Common myeloid progenitor, CD34-positive (primary cell): ENCODE measurements at regions of chr21 and their contacts with region 1.

Region 1: DNA sequence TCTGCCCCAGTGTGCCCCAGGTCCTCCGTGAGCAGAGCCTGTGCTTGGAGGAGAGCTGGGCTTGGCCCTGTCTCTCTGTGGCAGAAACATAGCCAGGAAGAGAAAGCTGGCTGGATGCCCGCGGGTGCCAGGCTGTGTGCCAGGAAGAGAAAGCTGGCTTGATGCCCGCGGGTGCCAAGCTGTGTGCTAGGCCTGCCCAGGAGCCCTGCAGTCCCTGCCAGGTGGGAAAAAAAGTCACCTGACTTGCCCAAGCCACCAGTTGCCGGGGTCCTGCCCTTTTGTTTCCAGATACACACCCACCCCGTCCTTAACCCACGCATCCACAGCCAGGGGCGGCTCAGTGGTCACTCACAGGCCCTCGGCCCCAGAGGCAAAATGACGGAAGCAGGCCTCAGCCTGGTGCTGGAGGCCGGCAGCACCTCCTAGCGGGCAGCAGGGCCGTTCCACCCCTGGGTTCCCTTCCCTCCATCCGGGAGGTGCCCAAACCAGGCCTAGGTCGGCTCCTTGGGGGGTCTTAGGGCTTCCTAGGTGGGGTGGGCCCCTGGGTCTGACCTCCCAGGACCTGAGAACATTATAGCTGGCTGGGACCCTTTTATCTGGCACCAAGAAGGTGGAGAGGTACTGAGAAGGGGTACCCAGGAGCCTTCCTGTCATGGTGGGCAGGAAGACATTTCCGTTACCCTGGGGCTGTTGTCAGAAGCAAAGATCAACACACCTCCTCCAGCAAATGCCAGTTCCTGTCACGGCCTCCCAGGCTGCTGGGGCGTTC is 9.1 kb downstream of the ITGB2 start:
- DNase-seq: peak; percentile 51 to 75 (median 65)
- H3K4me3 ChIP-seq: peak overlapping the region in 4 of 7 experiments; percentile 11 to 56 (median 26)
- H3K27ac ChIP-seq: peak overlapping the region; percentile 58 to 76
- H3K4me1 ChIP-seq: peaks cover 8 to 86% (median 83%) of the 10 kb centered on the region in 4 experiments
- H3K27me3 ChIP-seq: no peaks in the 10 kb centered on the region

Region 2: DNA sequence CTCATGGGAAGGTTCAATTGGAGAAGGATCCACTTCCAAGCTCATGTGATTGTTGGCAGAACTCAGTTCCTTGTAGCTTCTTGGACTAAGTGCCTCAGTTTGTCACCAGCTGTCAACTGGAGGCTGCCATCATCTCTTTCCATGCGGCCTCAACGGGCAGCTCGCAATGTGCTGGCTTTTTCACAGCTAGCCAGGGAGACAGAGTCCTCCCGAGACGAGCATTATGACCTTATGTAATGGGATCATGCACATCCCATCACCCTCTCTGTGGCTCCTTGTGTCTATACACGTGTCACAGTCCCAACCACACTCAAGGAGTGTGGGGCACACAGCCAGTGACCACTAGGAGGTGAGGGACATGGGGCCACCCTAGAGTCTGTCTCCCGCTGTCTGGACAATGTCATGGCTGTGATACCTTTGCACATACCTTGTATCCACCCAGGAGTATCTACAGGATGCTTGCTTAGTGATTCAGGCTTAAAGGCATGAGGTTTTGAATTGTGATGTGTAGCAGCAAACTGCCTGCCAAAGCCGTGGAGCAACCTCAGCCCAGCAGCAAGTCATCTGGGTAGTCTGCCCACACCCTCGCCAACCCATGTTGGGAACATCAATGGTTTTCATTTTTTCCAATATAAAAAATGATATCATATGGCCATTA is 315.4 kb before region 1 on chr21:
- CTCF ChIA-PET with region 1: no interaction called
- POLR2A ChIA-PET with region 1: no interaction called
- DNase-seq: no peak
- H3K4me3 ChIP-seq: no peak overlapping the region
- H3K27ac ChIP-seq: no peak overlapping the region
- H3K4me1 ChIP-seq: peaks cover 0 to 5% (median 0%) of the 10 kb centered on the region in 4 experiments
- H3K27me3 ChIP-seq: peaks cover 0 to 12% (median 0%) of the 10 kb centered on the region in 5 experiments

Region 3: GRCh38 chr21:44880762-44881585 is 30.6 kb before region 1 on chr21:
- CTCF ChIA-PET with region 1: interaction called, 13 read pairs
- POLR2A ChIA-PET with region 1: interaction called, 6 read pairs
- DNase-seq: peak; percentile 91 to 98 (median 95)
- H3K4me3 ChIP-seq: peak overlapping the region in 6 of 7 experiments; percentile 4 to 46 (median 25)
- H3K27ac ChIP-seq: peak overlapping the region; percentile 75 to 77
- H3K4me1 ChIP-seq: peaks cover 39 to 75% (median 68%) of the 10 kb centered on the region in 4 experiments
- H3K27me3 ChIP-seq: no peaks in the 10 kb centered on the region

Region 4: DNA sequence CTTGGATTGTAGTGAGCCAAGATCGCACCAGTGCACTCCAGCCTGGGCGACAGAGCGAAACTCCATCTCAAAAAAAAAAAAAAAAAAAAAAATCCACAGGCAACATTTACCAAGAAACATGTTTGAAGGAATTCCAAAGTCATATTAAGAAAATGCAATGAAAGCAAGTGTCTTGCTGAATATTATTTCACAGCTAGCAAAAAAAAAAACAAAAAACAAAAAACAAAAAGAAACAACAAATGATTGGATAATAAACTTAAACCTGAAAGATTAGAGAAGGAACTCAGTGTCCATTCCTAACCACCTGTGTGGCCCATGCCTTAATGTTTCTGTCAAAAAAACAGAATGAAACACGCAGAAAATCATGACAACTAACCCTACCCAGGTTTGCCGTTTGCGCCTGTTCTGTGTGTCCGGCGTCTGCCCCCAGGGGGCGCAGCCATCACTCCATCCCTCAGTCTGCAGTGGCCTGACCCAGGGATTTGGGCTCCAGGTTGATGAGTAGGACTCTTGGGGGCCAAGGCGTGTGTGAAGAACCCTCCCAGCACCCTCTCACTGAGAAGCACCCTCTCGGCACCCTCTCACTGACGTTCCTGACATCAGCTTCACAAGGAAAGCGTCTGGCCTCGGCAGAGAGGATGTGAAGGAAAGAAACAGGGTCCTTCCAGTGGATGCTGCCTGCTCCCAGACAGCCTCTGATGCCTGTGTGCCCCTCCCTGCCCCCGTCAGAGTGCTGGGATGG is 18.9 kb before region 1 on chr21:
- CTCF ChIA-PET with region 1: interaction called, 50 read pairs
- POLR2A ChIA-PET with region 1: interaction called, 5 read pairs
- DNase-seq: peak in 2 of 3 donors; percentile 63 to 74
- H3K4me3 ChIP-seq: no peak overlapping the region
- H3K27ac ChIP-seq: no peak overlapping the region
- H3K4me1 ChIP-seq: peaks cover 0 to 4% (median 0%) of the 10 kb centered on the region in 4 experiments
- H3K27me3 ChIP-seq: no peaks in the 10 kb centered on the region

Region 5: GRCh38 chr21:44982558-44983244 is 71.1 kb after region 1 on chr21:
- CTCF ChIA-PET with region 1: no interaction called
- POLR2A ChIA-PET with region 1: no interaction called
- DNase-seq: no peak
- H3K4me3 ChIP-seq: no peak overlapping the region
- H3K27ac ChIP-seq: no peak overlapping the region
- H3K4me1 ChIP-seq: peaks cover 0 to 7% (median 3%) of the 10 kb centered on the region in 4 experiments
- H3K27me3 ChIP-seq: peaks cover 0 to 3% (median 0%) of the 10 kb centered on the region in 5 experiments